ENCODE measurements at regions of chr7 and their contacts with region 1.

Region 1: DNA sequence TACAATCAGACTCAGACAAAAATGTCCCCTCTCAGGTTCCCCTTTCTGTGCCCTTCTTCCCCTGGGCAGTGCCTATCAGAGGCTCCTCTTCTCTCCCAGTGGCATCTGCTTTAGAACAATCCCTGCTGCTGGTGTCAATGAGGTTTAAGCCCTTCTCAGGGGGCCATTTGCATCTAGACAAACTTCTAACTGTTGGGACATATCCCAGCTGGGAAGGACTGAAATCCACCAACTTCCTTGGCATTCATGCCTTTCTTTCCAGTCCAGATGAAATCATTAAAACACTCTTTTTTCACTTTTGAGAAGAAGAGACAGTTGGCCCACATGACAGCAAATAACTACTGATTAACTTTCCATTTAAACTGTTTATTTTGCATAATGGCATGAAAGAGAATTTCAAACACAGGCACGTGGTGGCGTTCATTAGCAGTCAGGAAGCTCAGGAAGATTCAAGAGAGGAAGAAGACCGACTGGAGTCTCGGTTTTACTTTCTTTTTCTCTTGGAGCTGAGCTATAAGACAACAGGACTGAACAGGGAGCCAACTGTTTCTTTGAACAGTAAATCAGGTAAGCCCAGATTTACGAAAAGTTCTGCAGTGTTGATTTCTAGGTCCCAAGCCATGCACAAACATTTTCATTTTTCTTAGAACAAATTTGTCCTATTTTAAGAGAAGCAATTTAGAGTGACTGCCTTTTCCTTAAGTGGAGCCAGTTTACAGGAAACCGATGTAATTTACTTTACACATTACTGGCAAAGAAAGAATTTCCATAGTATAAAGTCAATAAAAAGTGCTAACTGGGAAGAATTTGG is at the start of gene GIMAP2:
- DNase-seq: no peak
- ATAC-seq: peak; percentile 85
- H3K4me3 Mint-ChIP-seq: peak within 1 kb of the TSS; percentile 98
- H3K27ac Mint-ChIP-seq: peak within 1 kb of the TSS; percentile 98
- H3K4me1 Mint-ChIP-seq: peaks cover 64% of the 10 kb centered on the region
- H3K27me3 Mint-ChIP-seq: no peaks in the 10 kb centered on the region
- total RNA-seq, gene GIMAP2: 139 to 140 TPM

Region 2: GRCh38 chr7:150631866-150632864 is 53.3 kb before region 1 on chr7 and contains the start of gene GIMAP6:
- POLR2A ChIA-PET with region 1: interaction called, 18 read pairs
- DNase-seq: no peak
- ATAC-seq: peak; percentile 63
- H3K4me3 Mint-ChIP-seq: peak within 1 kb of the TSS; percentile 93
- H3K27ac Mint-ChIP-seq: peak within 1 kb of the TSS; percentile 94
- H3K4me1 Mint-ChIP-seq: peaks cover 46% of the 10 kb centered on the region
- H3K27me3 Mint-ChIP-seq: no peaks in the 10 kb centered on the region
- total RNA-seq, gene GIMAP6: 124 to 130 TPM

Region 3: GRCh38 chr7:150648353-150649079 is 36.9 kb before region 1 on chr7:
- POLR2A ChIA-PET with region 1: no interaction called
- DNase-seq: no peak
- ATAC-seq: peak; percentile 56
- H3K4me3 Mint-ChIP-seq: peak overlapping the region; percentile 27
- H3K27ac Mint-ChIP-seq: peak overlapping the region; percentile 73
- H3K4me1 Mint-ChIP-seq: peaks cover 30% of the 10 kb centered on the region
- H3K27me3 Mint-ChIP-seq: no peaks in the 10 kb centered on the region

Region 4: DNA sequence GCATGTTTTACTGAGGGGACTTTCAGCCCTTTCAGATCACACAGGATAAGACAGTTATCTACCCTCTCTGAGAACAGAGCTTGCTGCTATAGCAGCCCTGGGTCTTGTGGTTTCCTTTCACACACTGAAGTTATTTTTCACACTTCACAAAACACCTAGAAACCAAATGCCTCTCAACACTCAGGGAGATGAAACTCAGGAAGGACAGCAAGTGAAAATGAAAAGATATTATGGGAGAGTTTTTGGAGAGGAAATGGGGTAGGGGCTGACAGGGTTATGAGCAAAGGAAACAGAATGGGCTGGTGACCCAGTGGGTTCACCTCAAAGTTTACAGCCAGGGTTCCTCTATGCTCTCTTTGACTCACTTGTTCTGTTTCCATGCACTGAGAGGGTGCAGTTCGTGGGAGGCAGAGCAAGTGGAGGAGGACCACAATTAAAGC is 16.9 kb before region 1 on chr7:
- POLR2A ChIA-PET with region 1: interaction called, 19 read pairs
- DNase-seq: peak; percentile 48
- ATAC-seq: peak; percentile 75
- H3K4me3 Mint-ChIP-seq: peak overlapping the region; percentile 75
- H3K27ac Mint-ChIP-seq: peak overlapping the region; percentile 89
- H3K4me1 Mint-ChIP-seq: peaks cover 70% of the 10 kb centered on the region
- H3K27me3 Mint-ChIP-seq: no peaks in the 10 kb centered on the region

Region 5: DNA sequence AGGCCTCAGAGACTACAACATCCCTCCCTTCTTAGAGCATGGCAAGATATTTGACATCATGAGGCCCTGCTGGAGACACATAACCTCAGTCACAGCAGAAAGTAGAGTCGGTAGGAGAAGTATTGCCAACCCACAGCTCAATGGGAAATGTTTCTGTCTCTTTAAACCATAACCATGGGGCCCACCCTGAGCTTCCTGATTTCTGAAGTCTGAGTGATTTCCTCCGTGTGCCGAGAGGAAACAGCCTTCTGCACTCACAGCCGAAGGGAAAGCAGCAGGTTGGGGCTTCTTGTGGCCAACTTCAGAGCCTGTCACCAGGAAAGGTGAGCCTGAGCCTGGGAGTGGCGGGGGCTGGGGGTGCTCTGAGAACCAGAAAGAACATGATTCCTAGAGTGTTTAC is 30.9 kb after region 1 on chr7 and contains the start of gene GIMAP1:
- POLR2A ChIA-PET with region 1: interaction called, 24 read pairs
- DNase-seq: no peak
- ATAC-seq: peak; percentile 76
- H3K4me3 Mint-ChIP-seq: peak within 1 kb of the TSS; percentile 84
- H3K27ac Mint-ChIP-seq: peak within 1 kb of the TSS; percentile 87
- H3K4me1 Mint-ChIP-seq: peaks cover 43% of the 10 kb centered on the region
- H3K27me3 Mint-ChIP-seq: no peaks in the 10 kb centered on the region
- total RNA-seq, gene GIMAP1: 42.1 to 43.0 TPM

Measured in activated naive CD8-positive, alpha-beta T cell treated with anti-CD3 and anti-CD28 coated beads, Interleukin-2, amount 10 ng/mL, durations not matched to agents 7 days and 5 days (primary cell).